ENCODE measurements at regions of chr20 and their contacts with region 1.

Region 1: DNA sequence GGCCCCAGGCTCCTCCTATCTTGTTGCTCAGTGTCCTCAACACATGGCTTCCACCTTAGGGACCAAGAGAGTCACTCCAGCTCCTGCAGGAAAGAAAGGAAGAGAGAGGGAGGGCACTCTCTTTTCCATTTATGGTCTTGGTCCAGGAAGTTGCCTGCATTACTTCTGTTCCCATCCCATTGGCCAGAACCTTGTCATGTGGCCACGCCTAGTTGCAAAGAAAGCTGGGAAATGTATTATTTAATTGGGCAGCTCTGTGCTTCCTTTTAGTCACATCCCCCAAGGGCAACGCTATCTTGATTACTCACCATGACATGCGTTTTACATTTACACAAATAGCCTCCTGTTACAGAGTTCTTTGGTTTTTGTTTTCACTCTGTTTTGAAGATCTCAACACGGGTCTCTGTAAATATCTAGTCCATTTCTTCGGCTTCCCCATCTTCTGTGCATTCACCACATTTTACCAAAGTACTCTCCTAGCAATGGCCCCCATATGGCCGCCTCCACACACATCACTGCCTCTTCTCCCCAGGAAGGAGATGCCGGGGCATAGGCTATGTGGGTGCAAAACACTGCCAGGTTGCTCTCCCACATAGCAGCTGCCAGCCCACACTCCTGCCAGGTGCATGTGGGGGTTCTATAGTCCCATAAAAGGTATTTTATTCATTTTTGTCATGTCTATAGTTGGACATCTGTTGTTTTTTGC is 35.7 kb upstream of the ZMYND8 start:
- DNase-seq: peak; percentile 54
- ATAC-seq: peak; percentile 71
- H3K4me3 ChIP-seq: no peak overlapping the region
- H3K4me3 Mint-ChIP-seq: peak overlapping the region; percentile 57
- H3K27ac ChIP-seq: peak overlapping the region; percentile 46 to 52
- H3K27ac Mint-ChIP-seq: peak overlapping the region; percentile 83
- H3K4me1 ChIP-seq: peaks cover 28 to 34% of the 10 kb centered on the region in 2 donors
- H3K4me1 Mint-ChIP-seq: peaks cover 37% of the 10 kb centered on the region
- H3K27me3 ChIP-seq: no peaks in the 10 kb centered on the region
- H3K27me3 Mint-ChIP-seq: no peaks in the 10 kb centered on the region
- CTCF ChIP-seq: no peak

Region 2: GRCh38 chr20:46757754-46758678 is 634.2 kb before region 1 on chr20:
- CTCF ChIA-PET with region 1: no interaction called
- POLR2A ChIA-PET with region 1: no interaction called
- intact Hi-C with region 1: loop called (anchors 10 kb)
- DNase-seq: peak; percentile 67
- ATAC-seq: no peak
- H3K4me3 ChIP-seq: no peak overlapping the region
- H3K4me3 Mint-ChIP-seq: no peak overlapping the region
- H3K27ac ChIP-seq: no peak overlapping the region
- H3K27ac Mint-ChIP-seq: no peak overlapping the region
- H3K4me1 ChIP-seq: peaks cover 0 to 6% of the 10 kb centered on the region in 2 donors
- H3K4me1 Mint-ChIP-seq: peaks cover 4% of the 10 kb centered on the region
- H3K27me3 ChIP-seq: peaks cover 0 to 6% (median 0%) of the 10 kb centered on the region in 4 experiments
- H3K27me3 Mint-ChIP-seq: peaks cover 19% of the 10 kb centered on the region
- CTCF ChIP-seq: peak; percentile 83

Region 3: DNA sequence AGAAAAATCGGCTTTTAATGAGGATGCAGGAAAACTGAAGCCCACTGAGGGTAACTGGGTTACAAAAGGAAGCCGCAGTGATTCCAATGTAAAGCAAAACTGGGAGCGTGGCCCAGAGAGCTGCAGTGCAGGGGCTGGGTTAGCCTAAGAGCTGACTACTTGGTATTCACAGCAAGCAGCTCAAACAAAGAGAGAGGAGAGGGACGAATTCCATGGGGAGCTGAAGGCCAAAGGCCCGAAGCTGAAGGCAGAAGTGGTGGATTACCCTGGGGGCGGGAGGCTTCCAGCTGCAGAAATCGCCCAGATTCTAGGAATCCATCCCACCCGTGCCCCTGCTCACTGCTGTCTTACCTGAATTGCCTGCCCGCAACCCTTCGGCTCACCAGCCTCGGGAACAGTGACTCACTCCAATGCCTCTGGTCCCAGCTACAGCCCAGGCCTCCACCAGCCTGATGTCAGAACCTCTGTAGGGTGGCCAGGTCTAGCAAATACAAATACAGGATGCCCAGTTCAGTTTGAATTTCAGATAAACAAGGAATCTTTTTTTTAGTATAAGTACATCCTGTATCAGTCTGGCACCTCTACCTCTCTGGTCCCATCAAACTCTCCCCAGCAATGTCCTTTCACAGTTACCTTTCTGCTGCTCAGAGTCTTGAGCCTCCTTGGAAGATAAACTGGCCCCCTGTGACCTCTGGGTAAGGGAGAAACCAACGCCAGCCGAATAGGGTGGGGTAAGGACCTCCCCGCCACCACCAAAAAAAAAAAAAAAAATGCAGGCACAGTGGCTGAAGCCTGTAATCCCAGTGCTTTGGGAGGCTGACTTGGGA is 21.1 kb before region 1 on chr20:
- CTCF ChIA-PET with region 1: no interaction called
- POLR2A ChIA-PET with region 1: no interaction called
- intact Hi-C with region 1: no loop called
- DNase-seq: no peak
- ATAC-seq: no peak
- H3K4me3 ChIP-seq: no peak overlapping the region
- H3K4me3 Mint-ChIP-seq: no peak overlapping the region
- H3K27ac ChIP-seq: no peak overlapping the region
- H3K27ac Mint-ChIP-seq: no peak overlapping the region
- H3K4me1 ChIP-seq: no peaks in the 10 kb centered on the region
- H3K4me1 Mint-ChIP-seq: no peaks in the 10 kb centered on the region
- H3K27me3 ChIP-seq: no peaks in the 10 kb centered on the region
- H3K27me3 Mint-ChIP-seq: no peaks in the 10 kb centered on the region
- CTCF ChIP-seq: no peak

Region 4: DNA sequence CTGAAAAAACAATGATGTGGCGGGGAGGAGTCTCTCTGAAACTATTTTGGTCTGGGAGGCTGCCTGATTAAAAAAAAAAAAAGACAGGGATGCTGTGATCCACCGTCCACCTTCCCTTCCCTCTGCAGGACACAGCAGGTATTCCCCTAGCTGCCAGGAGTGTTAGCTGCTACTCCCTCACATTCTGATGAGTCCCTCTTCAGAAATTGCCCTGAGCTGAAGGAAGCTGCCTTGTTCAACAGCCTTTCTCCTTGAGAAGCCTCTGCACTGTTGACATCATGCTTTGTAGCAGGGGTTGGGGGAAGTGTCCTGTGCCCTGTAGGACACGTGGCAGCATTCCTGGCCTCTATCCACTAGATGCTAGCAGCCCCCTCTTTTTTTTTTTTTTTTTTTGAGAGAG is 36.0 kb after region 1 on chr20:
- CTCF ChIA-PET with region 1: interaction called, 4 read pairs
- POLR2A ChIA-PET with region 1: interaction called, 12 read pairs
- intact Hi-C with region 1: no loop called
- DNase-seq: no peak
- ATAC-seq: no peak
- H3K4me3 ChIP-seq: no peak overlapping the region
- H3K4me3 Mint-ChIP-seq: no peak overlapping the region
- H3K27ac ChIP-seq: no peak overlapping the region
- H3K27ac Mint-ChIP-seq: peak overlapping the region; percentile 62
- H3K4me1 ChIP-seq: peaks cover 17 to 19% of the 10 kb centered on the region in 2 donors
- H3K4me1 Mint-ChIP-seq: peaks cover 19% of the 10 kb centered on the region
- H3K27me3 ChIP-seq: no peaks in the 10 kb centered on the region
- H3K27me3 Mint-ChIP-seq: no peaks in the 10 kb centered on the region
- CTCF ChIP-seq: no peak

Measured in B cell (primary cell).